Cardiac septum (tissue), 1 donor: ENCODE measurements at regions of chr12 and their contacts with region 1.

Region 1: GRCh38 chr12:57803319-57803893 is 15.1 kb downstream of the AVIL start:
- DNase-seq: no peak

Region 2: DNA sequence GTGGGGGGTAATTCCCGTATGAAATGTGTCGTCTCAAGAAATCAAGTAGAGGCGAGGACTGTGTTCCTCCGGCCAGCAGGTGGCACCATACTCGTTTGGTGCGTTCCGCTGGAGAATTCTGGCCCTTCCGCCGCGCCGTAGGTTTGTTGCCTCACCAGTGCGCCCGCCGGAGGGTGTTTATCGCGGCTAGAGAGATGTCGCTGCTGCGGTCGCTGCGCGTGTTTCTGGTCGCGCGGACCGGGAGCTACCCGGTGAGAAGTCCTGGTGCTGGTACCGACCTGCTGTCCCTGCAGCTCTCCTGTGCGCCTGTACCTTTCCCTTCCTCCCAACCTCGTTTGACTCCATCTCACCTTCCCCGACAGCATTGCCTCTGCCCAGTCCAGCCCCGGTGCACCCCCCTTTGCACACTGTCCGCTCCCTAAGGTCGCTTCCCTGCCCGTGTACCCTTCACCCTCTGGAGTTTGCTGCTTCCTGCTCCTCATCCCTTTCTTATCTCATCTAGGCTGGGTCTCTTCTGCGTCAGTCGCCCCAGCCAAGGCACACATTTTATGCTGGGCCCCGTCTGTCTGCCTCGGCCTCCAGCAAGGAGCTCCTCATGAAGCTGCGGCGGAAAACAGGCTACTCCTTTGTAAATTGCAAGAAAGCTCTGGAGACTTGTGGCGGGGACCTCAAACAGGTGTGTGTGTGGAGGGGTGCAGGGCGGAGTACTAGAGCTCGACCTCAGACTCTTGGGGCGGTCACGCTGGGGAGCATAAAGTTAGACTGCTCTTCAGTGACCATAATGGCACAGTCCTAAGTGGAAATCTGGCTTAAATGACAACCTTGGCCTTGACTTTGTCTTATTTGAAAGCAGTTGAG is 20.6 kb before region 1 on chr12 and contains the start of gene TSFM:
- intact Hi-C with region 1: loop called (anchors 2 kb)
- DNase-seq: peak; percentile 97
- total RNA-seq, gene TSFM: 47.7 TPM

Region 3: GRCh38 chr12:57830393-57830792 is 27.0 kb after region 1 on chr12:
- intact Hi-C with region 1: loop called (anchors 2 kb)
- DNase-seq: no peak

Region 4: GRCh38 chr12:57904848-57905811 is 101.7 kb after region 1 on chr12:
- intact Hi-C with region 1: loop called (anchors 2 kb)
- DNase-seq: peak; percentile 91